ENCODE measurements at regions of chr14 and their contacts with region 1.

Region 1: DNA sequence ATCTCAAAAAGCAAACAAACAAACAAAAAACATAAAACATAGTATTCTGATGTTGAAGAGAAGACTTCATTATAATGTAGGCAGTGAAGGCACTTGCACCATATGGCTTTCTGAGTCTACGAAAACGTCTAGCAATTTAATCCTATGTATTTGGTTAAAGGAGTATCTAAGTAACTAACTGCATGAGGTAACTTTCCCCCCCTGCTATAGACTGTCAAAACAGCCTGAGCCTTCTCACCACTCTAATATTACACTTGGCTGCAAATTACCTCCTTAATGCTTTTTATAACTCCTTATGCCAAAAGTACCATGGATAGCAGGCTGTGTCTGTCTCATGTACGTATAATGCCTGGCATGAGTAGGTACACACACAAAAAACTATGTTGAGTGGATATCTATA is 607.6 kb upstream of the FLRT2 start:
- DNase-seq: no peak
- H3K4me3 ChIP-seq: no peak overlapping the region
- H3K4me3 Mint-ChIP-seq: no peak overlapping the region
- H3K27ac ChIP-seq: no peak overlapping the region
- H3K27ac Mint-ChIP-seq: no peak overlapping the region
- H3K4me1 ChIP-seq: no peaks in the 10 kb centered on the region
- H3K4me1 Mint-ChIP-seq: no peaks in the 10 kb centered on the region
- H3K27me3 ChIP-seq: no peaks in the 10 kb centered on the region
- H3K27me3 Mint-ChIP-seq: no peaks in the 10 kb centered on the region
- CTCF ChIP-seq: no peak

Region 2: GRCh38 chr14:84961637-84962036 is 39.3 kb after region 1 on chr14:
- intact Hi-C with region 1: loop called in 1 of 2 experiments (anchors 2 kb)
- DNase-seq: no peak
- H3K4me3 ChIP-seq: no peak overlapping the region
- H3K4me3 Mint-ChIP-seq: no peak overlapping the region
- H3K27ac ChIP-seq: no peak overlapping the region
- H3K27ac Mint-ChIP-seq: no peak overlapping the region
- H3K4me1 ChIP-seq: no peaks in the 10 kb centered on the region
- H3K4me1 Mint-ChIP-seq: no peaks in the 10 kb centered on the region
- H3K27me3 ChIP-seq: no peaks in the 10 kb centered on the region
- H3K27me3 Mint-ChIP-seq: no peaks in the 10 kb centered on the region
- CTCF ChIP-seq: no peak

Measured in CD14-positive monocyte (primary cell).